ENCODE measurements at regions of chr20 and their contacts with region 1.

Region 1: GRCh38 chr20:33097001-33097400 is 17.6 kb downstream of the BPIFB4 start:
- DNase-seq: no peak
- H3K4me3 ChIP-seq: no peak overlapping the region
- H3K4me1 ChIP-seq: no peaks in the 10 kb centered on the region
- H3K27me3 ChIP-seq: no peaks in the 10 kb centered on the region

Region 2: GRCh38 chr20:32894026-32894483 is 202.9 kb before region 1 on chr20:
- in situ Hi-C with region 1: loop called (anchors 10 kb)
- DNase-seq: peak in 1 of 2 experiments; percentile 59
- H3K4me3 ChIP-seq: no peak overlapping the region
- H3K4me1 ChIP-seq: no peaks in the 10 kb centered on the region
- H3K27me3 ChIP-seq: no peaks in the 10 kb centered on the region

Region 3: DNA sequence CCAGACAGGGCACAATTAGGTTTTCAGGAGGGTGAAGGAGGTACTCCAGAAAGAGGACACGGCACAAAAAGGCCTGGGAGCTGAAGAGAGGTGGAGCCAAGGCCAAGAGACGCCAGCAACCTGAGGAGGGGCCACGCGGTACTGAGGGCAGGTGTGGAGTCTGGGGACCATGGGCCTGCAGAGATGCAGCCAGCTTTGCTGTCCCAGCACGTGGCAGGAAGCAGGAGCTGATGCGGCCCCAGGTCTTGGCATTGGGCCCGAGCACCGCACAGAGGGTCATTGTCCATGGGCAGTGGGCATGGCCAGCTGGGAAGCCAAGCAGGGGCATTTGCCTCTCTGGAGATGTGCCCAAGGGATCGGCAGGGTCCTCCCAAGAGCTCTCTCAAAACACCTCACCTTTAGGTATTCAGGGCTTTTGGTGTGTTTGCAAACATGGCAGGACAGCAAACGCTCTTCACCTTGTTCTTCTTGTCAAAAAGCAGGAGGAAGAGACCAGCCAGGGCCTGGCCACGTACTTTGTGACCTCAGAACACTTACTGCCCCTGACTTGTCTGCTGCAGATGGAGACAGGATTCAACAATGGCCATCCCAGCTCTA is 184.6 kb after region 1 on chr20:
- in situ Hi-C with region 1: loop called (anchors 10 kb)
- DNase-seq: no peak
- H3K4me3 ChIP-seq: no peak overlapping the region
- H3K4me1 ChIP-seq: peaks cover 9% of the 10 kb centered on the region
- H3K27me3 ChIP-seq: no peaks in the 10 kb centered on the region